Activated B cell treated with CpG ODN at 0.5 μM for 24 hours (primary cell): ENCODE measurements at regions of chr17 and their contacts with region 1.

Region 1: DNA sequence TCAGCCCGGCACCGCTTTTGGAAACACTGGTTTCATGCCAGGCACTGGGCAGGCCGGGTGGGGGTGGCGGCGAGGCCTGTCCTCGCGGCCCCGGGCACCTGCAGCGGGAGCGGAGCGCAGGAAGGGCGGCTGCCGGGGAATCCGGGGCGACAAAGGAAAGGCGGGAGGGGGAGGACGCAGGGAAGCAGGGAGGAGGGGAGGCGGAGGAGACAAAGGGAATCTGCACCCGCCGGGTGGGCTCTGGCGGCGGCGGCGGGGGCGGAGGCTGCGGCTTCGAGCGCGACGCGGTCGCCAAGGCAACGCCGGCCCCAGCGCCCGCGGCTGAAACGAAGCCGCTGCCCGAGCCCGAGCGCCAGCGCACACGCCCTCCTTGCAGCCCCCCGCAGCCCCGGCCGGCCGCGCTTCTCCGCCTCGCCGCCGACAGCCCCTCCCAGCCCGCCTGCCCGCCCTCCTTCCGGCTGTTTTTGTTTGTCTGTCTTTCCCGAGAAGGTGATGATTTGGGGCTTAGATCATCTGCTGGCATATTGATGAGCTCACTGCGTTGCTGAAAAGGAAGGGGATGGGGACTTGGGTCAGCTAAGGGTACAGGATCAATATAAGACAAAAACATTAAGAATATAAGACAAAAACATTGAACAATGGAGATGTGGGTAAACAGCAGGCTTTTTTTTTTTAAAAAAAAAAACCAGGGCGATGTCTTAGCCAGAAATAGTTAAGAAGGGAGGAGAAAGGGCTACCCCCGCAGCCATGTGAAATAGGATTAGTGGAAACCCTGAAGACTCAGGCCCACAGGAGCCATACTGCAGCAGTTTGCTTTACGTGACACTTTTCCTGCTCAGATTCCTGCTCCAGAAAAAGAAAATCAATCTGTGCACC is 32.7 kb downstream of the CDK5R1 start:
- DNase-seq: peak; percentile 48
- ATAC-seq: peak; percentile 14
- H3K4me3 Mint-ChIP-seq: peak overlapping the region; percentile 87
- H3K27ac Mint-ChIP-seq: peak overlapping the region; percentile 86
- H3K4me1 Mint-ChIP-seq: peaks cover 89% of the 10 kb centered on the region
- H3K27me3 Mint-ChIP-seq: no peaks in the 10 kb centered on the region
- CTCF ChIP-seq: no peak

Region 2: GRCh38 chr17:32349854-32350665 is 169.4 kb before region 1 on chr17 and contains the start of gene ZNF207:
- CTCF ChIA-PET with region 1: no interaction called
- POLR2A ChIA-PET with region 1: no interaction called
- intact Hi-C with region 1: loop called (anchors 1 kb)
- DNase-seq: peak; percentile 89
- ATAC-seq: peak; percentile 98
- H3K4me3 Mint-ChIP-seq: peak within 1 kb of the TSS; percentile 98
- H3K27ac Mint-ChIP-seq: peak within 1 kb of the TSS; percentile 99
- H3K4me1 Mint-ChIP-seq: peaks cover 40% of the 10 kb centered on the region
- H3K27me3 Mint-ChIP-seq: no peaks in the 10 kb centered on the region
- CTCF ChIP-seq: no peak
- total RNA-seq, gene ZNF207: 231 and 276 TPM in 2 replicates

Region 3: GRCh38 chr17:32491371-32492263 is 27.8 kb before region 1 on chr17:
- CTCF ChIA-PET with region 1: interaction called, 6 read pairs
- POLR2A ChIA-PET with region 1: interaction called, 90 read pairs
- intact Hi-C with region 1: loop called (anchors 1 kb)
- DNase-seq: no peak
- ATAC-seq: no peak
- H3K4me3 Mint-ChIP-seq: peak overlapping the region; percentile 67
- H3K27ac Mint-ChIP-seq: peak overlapping the region; percentile 85
- H3K4me1 Mint-ChIP-seq: peaks cover 77% of the 10 kb centered on the region
- H3K27me3 Mint-ChIP-seq: no peaks in the 10 kb centered on the region
- CTCF ChIP-seq: no peak

Region 4: GRCh38 chr17:32533296-32533695 is 13.8 kb after region 1 on chr17:
- CTCF ChIA-PET with region 1: no interaction called
- POLR2A ChIA-PET with region 1: interaction called, 12 read pairs
- intact Hi-C with region 1: no loop called
- DNase-seq: no peak
- ATAC-seq: no peak
- H3K4me3 Mint-ChIP-seq: no peak overlapping the region
- H3K27ac Mint-ChIP-seq: no peak overlapping the region
- H3K4me1 Mint-ChIP-seq: peaks cover 8% of the 10 kb centered on the region
- H3K27me3 Mint-ChIP-seq: no peaks in the 10 kb centered on the region
- CTCF ChIP-seq: no peak

Region 5: GRCh38 chr17:32558997-32559650 is 39.7 kb after region 1 on chr17:
- CTCF ChIA-PET with region 1: interaction called, 8 read pairs
- POLR2A ChIA-PET with region 1: interaction called, 16 read pairs
- intact Hi-C with region 1: loop called (anchors 1 kb)
- DNase-seq: no peak
- ATAC-seq: peak; percentile 64
- H3K4me3 Mint-ChIP-seq: peak overlapping the region; percentile 48
- H3K27ac Mint-ChIP-seq: peak overlapping the region; percentile 86
- H3K4me1 Mint-ChIP-seq: peaks cover 38% of the 10 kb centered on the region
- H3K27me3 Mint-ChIP-seq: no peaks in the 10 kb centered on the region
- CTCF ChIP-seq: no peak